Psoas muscle (tissue), 8 donors: ENCODE measurements at regions of chr5 and their contacts with region 1.

Region 1: DNA sequence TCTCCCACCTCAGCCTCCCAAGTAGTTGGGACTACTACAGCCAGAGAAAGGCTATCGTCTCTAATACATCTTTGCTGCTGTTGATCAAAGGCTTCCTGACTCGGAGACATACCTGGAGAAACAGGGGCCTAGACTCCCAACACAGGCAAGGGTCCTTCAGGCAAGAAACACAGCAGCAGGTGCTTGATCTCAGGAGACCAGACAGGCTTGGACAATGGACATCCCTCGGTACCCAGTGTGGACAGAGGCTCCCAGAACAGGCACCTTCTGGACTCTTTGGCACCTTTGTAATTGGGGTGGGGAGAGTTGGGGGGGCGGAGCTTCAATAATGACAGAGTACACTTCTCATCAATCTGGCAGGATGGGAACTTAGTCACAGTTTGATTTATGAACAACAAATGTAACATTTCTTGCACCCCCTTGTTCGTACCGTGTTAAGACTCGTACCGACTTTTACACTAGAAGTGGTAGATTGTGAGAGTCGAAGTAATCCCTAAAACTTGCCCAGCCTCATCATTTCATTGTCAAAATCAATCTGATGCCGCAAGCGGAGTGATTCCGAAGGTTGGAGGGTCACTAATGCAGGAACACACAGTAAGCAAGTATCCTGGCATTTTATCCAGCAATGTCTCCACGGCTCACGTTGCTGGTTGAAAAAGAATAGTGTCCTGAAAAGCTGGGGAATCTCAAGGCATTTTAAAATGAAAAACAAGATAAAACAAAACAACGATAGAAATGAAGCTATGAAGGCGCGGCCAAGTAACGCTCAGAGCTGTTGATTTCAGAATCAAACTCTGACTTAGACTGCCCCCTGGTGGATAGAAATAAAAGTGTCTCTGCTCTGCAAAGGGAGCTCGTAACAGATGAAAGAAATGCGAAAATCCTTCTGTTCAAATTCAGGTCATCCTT is 46.4 kb upstream of the STK32A start:
- DNase-seq: no peak
- ATAC-seq: peak; percentile 49 to 76 (median 68)
- H3K4me3 ChIP-seq: peak overlapping the region; percentile 40
- H3K27ac ChIP-seq: no peak overlapping the region
- H3K4me1 ChIP-seq: no peaks in the 10 kb centered on the region
- H3K27me3 ChIP-seq: no peaks in the 10 kb centered on the region
- CTCF ChIP-seq: peak; percentile 83

Region 2: GRCh38 chr5:146533260-146533857 is 655.1 kb before region 1 on chr5:
- intact Hi-C with region 1: loop called (anchors 5 kb)
- DNase-seq: peak; percentile 39 to 64
- ATAC-seq: peak; percentile 42 to 73 (median 61)
- H3K4me3 ChIP-seq: no peak overlapping the region
- H3K27ac ChIP-seq: no peak overlapping the region
- H3K4me1 ChIP-seq: no peaks in the 10 kb centered on the region
- H3K27me3 ChIP-seq: no peaks in the 10 kb centered on the region
- CTCF ChIP-seq: peak; percentile 62

Region 3: GRCh38 chr5:147098233-147098790 is 90.1 kb before region 1 on chr5:
- intact Hi-C with region 1: loop called in 1 of 2 experiments (anchors 5 kb)
- DNase-seq: no peak
- ATAC-seq: no peak
- H3K4me3 ChIP-seq: no peak overlapping the region
- H3K27ac ChIP-seq: no peak overlapping the region
- H3K4me1 ChIP-seq: no peaks in the 10 kb centered on the region
- H3K27me3 ChIP-seq: peaks cover 0 to 2% (median 0%) of the 10 kb centered on the region in 3 donors
- CTCF ChIP-seq: peak; percentile 33